ENCODE measurements at regions of chr5 and their contacts with region 1.

Region 1: GRCh38 chr5:125446996-125447395 is 700.6 kb upstream of the ZNF608 start:
- DNase-seq: no peak
- ATAC-seq: no peak
- H3K4me3 ChIP-seq: no peak overlapping the region
- H3K27ac ChIP-seq: no peak overlapping the region
- H3K4me1 ChIP-seq: no peaks in the 10 kb centered on the region
- H3K27me3 ChIP-seq: no peaks in the 10 kb centered on the region
- CTCF ChIP-seq: no peak
- POLR2A ChIP-seq: no peak

Region 2: GRCh38 chr5:124315741-124316415 is 1131.1 kb before region 1 on chr5:
- intact Hi-C with region 1: loop called (anchors 10 kb)
- DNase-seq: no peak
- ATAC-seq: no peak
- H3K4me3 ChIP-seq: no peak overlapping the region
- H3K27ac ChIP-seq: no peak overlapping the region
- H3K4me1 ChIP-seq: no peaks in the 10 kb centered on the region
- H3K27me3 ChIP-seq: no peaks in the 10 kb centered on the region
- CTCF ChIP-seq: no peak
- POLR2A ChIP-seq: no peak

Region 3: GRCh38 chr5:126373375-126374108 is 926.5 kb after region 1 on chr5:
- intact Hi-C with region 1: no loop called
- DNase-seq: no peak
- ATAC-seq: no peak
- H3K4me3 ChIP-seq: no peak overlapping the region
- H3K27ac ChIP-seq: no peak overlapping the region
- H3K4me1 ChIP-seq: peaks cover 59% of the 10 kb centered on the region
- H3K27me3 ChIP-seq: no peaks in the 10 kb centered on the region
- CTCF ChIP-seq: no peak
- POLR2A ChIP-seq: no peak

Measured in body of pancreas (tissue), 4 donors.